ENCODE measurements at regions of chr10 and their contacts with region 1.

Region 1: DNA sequence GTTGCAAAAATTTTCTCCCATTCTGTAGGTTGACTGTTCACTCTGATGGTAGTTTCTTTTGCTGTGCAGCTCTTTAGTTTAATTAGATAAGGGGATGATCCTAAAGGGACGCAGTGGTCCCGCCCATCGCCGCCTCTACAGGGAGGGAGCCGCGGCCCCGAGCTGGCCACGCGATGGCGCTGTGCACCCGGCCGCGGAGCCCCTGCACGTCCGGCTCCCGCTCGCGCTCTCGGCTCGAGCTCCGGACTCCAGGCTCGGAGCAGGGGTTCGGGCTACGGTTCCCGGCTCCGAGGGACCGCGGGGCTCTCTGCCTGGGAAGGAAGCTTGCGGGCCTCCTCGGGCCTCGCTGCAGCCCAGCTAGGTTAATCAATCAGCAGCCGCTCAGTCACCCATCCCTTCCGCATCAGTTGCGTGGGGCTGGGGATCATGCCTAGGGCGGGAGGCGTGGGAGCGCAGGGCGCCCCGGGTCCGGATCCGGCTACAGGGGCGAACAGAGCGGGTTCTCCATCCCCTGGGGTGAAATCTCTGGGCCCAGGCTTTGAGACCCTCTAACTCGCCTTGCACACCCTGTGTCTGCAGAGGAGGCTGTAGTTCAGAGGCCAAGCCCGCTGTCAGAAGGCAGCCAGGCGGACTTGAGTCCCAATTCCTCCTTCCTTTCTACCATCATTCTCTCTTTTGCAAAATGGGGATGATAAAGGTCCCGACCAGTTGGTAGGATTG is 97.9 kb downstream of the WDR11 start:
- DNase-seq: peak; percentile 86
- CTCF ChIP-seq: peak; percentile 88

Region 2: GRCh38 chr10:120286280-120286679 is 662.8 kb before region 1 on chr10:
- CTCF ChIA-PET with region 1: no interaction called
- POLR2A ChIA-PET with region 1: no interaction called
- DNase-seq: no peak
- CTCF ChIP-seq: no peak

Region 3: GRCh38 chr10:120628197-120628596 is 320.9 kb before region 1 on chr10:
- CTCF ChIA-PET with region 1: no interaction called
- POLR2A ChIA-PET with region 1: no interaction called
- DNase-seq: no peak
- CTCF ChIP-seq: no peak

Region 4: GRCh38 chr10:120861178-120861855 is 87.7 kb before region 1 on chr10:
- CTCF ChIA-PET with region 1: no interaction called
- POLR2A ChIA-PET with region 1: no interaction called
- DNase-seq: no peak
- CTCF ChIP-seq: no peak

Region 5: GRCh38 chr10:120931423-120931822 is 17.6 kb before region 1 on chr10:
- CTCF ChIA-PET with region 1: interaction called, 11 read pairs
- POLR2A ChIA-PET with region 1: no interaction called
- DNase-seq: no peak
- CTCF ChIP-seq: no peak

Region 6: DNA sequence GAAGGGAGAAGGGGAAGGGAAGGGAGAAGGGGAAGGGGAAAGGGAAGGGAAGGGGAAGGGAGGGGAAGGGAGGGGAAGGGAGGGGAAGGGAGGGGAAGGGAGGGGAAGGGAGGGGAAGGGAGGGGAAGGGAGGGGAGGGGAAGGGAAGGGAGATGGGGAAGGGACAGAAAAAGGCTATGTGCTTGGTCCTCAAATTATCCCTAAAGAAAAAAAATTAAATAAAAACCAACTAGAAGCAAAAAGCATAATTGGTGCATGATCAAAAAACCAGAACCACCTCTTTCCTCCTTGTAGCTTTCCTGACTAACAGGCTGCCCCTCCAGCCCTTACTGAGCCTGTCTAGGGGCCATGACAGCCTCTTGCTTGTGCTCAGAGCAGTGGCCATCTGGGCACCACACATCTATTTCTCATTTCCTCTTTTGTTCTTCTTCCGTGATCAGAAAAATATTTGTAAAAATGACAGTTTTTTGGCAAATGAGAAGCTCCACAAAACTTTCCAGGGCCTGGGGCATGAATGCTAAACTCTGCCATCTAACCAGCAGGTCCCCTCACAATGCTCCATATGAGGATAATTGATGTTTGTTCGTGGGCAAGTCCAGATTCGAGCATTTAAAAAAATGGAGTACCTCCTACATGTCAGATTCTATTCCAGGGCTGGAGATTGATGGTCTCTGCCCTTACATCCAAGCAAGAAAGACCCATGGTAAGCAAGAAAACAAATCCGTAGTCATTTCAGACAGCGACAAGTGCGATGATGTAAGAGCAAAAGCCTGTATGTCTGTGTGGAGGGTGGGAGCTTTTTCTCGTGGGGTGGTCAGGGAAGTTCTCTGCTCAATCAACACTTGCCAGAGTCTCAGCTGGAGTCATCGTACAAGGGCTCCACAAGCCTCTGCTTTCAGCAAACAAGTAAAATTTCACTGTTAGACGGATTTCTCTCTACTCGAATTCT is 223.1 kb after region 1 on chr10:
- CTCF ChIA-PET with region 1: no interaction called
- POLR2A ChIA-PET with region 1: no interaction called
- DNase-seq: no peak
- CTCF ChIP-seq: no peak

Region 7: DNA sequence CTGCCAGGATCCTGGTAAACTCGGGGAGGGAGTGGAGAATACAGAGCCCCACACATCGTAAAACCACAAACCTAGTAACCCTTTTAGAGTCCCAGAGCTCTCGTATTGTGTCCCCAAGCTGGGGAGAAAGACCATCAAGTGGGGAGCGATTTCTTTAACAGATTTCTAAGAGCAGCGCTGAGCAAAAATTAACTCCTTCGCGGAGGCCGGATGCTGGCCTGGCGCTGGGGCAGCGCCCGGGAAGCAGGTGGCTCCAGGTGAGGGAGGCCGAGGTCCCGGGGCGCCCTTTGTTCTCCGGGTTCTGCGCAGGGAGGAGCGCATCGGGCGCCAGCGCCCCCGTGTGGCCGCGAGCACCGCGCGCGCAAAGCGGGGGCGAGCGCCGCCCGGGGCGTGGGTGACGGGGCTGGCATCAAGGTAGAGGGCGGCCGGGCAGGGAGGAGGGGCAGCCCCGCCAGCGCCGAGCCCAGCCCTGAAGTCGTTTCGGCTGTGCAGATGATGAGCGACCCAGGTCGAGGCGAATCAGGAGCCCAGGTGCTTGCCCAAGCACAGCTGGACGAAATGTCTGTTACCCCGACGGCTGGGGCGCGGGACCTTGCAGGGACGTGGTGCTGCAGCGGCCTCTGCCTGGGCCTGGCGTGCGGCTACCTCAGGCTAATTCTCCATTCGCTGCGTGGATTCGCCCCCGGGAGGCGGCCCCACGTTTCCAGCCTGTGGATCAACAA is 659.6 kb after region 1 on chr10:
- CTCF ChIA-PET with region 1: interaction called, 10 read pairs
- POLR2A ChIA-PET with region 1: no interaction called
- DNase-seq: peak; percentile 79
- CTCF ChIP-seq: peak; percentile 64

Region 8: GRCh38 chr10:121734589-121735045 is 785.6 kb after region 1 on chr10:
- CTCF ChIA-PET with region 1: interaction called, 17 read pairs
- POLR2A ChIA-PET with region 1: no interaction called
- DNase-seq: peak; percentile 63
- CTCF ChIP-seq: peak; percentile 49

Region 9: DNA sequence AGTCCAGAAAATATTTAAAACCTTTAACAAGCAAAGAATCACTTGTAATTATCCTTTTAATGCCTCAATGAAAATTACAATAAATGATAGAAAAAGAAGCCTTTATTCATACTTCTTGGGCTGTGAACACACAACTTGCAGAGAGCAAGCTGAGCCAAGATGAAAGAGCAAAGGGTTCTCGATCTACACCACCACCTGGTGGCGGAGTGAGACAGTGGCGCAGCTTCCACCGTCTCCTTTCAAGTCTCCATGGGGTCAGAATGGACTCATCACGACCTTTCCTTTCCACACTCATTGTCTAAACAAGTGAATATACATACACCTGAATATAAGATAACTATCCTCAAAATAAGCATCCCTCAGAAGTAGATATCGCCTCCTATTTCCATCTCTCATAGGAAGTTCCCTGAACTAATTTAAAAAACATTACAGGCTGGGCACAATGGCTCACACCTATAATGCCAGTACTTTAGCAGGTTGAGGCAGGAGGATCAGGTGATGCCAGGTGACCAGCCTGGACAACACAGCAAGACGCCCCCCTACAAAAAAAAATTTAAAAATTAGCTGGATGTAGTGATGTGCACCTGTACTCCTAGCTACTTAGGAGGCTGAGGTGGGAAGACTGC is 938.1 kb after region 1 on chr10:
- CTCF ChIA-PET with region 1: interaction called, 15 read pairs
- POLR2A ChIA-PET with region 1: no interaction called
- DNase-seq: peak; percentile 62
- CTCF ChIP-seq: peak; percentile 54